Activated CD4-positive, alpha-beta T cell treated with anti-CD3 and anti-CD28 coated beads, Interleukin-2, amount 10 ng/mL, durations not matched to agents 7 days and 5 days (primary cell): ENCODE measurements at regions of chr19 and their contacts with region 1.

Region 1: DNA sequence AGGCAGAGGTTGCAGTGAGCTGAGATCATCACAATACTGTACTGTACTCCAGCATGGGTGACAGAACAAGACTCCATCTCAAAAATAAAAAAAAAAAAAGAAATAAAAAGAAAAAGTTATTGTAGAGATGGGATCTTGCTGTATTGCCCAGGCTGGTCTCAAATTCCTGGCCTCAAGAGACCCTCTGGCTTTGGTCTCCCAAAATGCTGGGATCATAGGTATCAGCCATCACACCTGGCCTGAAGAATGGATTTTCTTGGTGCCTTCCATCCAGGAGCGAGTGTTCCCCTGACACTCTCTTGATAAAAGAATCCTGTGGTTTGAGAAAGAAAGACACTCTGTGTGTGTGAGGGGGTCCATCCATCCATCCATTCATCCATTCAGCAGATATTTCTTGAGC is 4.7 kb downstream of the OLFM2 start:
- DNase-seq: no peak
- H3K4me3 Mint-ChIP-seq: no peak overlapping the region
- H3K27ac Mint-ChIP-seq: no peak overlapping the region
- H3K4me1 Mint-ChIP-seq: peaks cover 9% of the 10 kb centered on the region
- H3K27me3 Mint-ChIP-seq: peaks cover 33% of the 10 kb centered on the region

Region 2: GRCh38 chr19:9865732-9866501 is 65.7 kb before region 1 on chr19:
- CTCF ChIA-PET with region 1: no interaction called
- POLR2A ChIA-PET with region 1: no interaction called
- DNase-seq: peak; percentile 79
- H3K4me3 Mint-ChIP-seq: peak overlapping the region; percentile 65
- H3K27ac Mint-ChIP-seq: peak overlapping the region; percentile 93
- H3K4me1 Mint-ChIP-seq: peaks cover 63% of the 10 kb centered on the region
- H3K27me3 Mint-ChIP-seq: no peaks in the 10 kb centered on the region

Region 3: GRCh38 chr19:10000171-10000826 is 68.7 kb after region 1 on chr19:
- CTCF ChIA-PET with region 1: interaction called, 10 read pairs
- POLR2A ChIA-PET with region 1: no interaction called
- DNase-seq: peak; percentile 71
- H3K4me3 Mint-ChIP-seq: no peak overlapping the region
- H3K27ac Mint-ChIP-seq: no peak overlapping the region
- H3K4me1 Mint-ChIP-seq: peaks cover 11% of the 10 kb centered on the region
- H3K27me3 Mint-ChIP-seq: peaks cover 10% of the 10 kb centered on the region

Region 4: DNA sequence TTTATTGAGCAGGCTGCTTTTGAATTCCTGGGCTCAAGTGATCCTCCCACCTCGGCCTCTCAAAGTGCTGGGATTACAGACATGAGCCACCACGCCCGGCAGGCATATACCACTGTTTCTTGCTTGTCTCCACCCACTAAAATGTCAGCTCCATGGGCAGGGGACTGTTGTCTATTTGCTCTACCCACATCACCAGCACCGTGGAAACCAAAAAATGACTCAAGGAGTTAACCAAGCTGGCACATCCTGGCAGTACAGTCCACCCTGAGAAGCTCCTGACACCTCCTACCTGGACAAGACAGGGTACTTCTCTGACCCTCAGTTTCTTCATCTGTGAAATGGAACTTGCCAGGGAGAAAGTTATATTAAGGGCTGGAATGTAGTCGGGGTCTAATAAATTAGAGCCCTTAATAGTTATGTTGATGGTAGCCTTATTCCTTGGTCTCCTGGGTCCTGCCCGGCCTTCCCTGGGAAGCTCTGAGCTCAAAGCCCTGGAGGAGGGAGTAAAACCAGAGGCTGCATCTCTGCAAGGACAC is 95.6 kb after region 1 on chr19:
- CTCF ChIA-PET with region 1: interaction called, 20 read pairs
- POLR2A ChIA-PET with region 1: no interaction called
- DNase-seq: no peak
- H3K4me3 Mint-ChIP-seq: no peak overlapping the region
- H3K27ac Mint-ChIP-seq: no peak overlapping the region
- H3K4me1 Mint-ChIP-seq: peaks cover 7% of the 10 kb centered on the region
- H3K27me3 Mint-ChIP-seq: peaks cover 13% of the 10 kb centered on the region